ENCODE measurements at regions of chr3 and their contacts with region 1.

Region 1: GRCh38 chr3:151316267-151316991 is at the start of gene GPR87:
- DNase-seq: no peak
- H3K4me3 Mint-ChIP-seq: peak within 1 kb of the TSS; percentile 7
- H3K27ac Mint-ChIP-seq: peak within 1 kb of the TSS; percentile 61
- H3K4me1 Mint-ChIP-seq: peaks cover 24% of the 10 kb centered on the region
- H3K27me3 Mint-ChIP-seq: no peaks in the 10 kb centered on the region
- total RNA-seq, gene GPR87: 0.62 and 0.93 TPM in 2 replicates

Region 2: GRCh38 chr3:151265866-151266265 is 50.6 kb before region 1 on chr3:
- intact Hi-C with region 1: no loop called
- DNase-seq: no peak
- H3K4me3 Mint-ChIP-seq: no peak overlapping the region
- H3K27ac Mint-ChIP-seq: no peak overlapping the region
- H3K4me1 Mint-ChIP-seq: peaks cover 66% of the 10 kb centered on the region
- H3K27me3 Mint-ChIP-seq: peaks cover 5% of the 10 kb centered on the region

Region 3: DNA sequence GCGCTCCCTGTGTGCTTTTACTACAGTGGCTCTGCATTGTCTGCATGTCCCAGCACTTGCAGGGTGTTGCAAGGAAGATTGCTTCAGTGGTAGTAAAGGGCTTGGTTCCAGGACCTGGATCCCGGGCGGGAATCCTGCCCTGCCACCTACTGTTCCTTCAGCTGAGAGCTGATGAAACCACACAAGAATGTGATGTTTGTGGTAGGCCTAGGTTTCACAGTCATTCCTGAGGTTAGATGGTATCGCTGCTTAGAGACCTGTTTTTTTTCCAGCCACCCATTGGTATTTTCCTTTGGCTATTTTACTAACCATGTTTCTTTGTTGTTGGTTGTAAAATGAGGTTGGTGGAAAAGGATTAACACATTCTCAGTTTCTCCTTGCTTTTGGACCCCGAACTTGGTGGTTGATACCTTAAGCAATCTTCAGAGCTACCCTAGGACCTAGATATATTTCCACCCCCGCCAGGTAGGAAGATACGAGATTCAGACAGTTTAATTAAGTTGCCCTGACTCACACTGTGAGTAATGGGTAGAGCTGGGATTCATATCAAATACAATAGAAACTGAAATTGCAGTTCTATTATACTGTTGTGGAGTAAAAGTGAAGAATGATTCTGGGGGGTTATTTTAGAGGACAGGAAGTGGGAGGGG is 11.2 kb before region 1 on chr3:
- intact Hi-C with region 1: loop called (anchors 1 kb)
- DNase-seq: no peak
- H3K4me3 Mint-ChIP-seq: peak overlapping the region; percentile 5
- H3K27ac Mint-ChIP-seq: peak overlapping the region; percentile 70
- H3K4me1 Mint-ChIP-seq: peaks cover 63% of the 10 kb centered on the region
- H3K27me3 Mint-ChIP-seq: peaks cover 3% of the 10 kb centered on the region

Region 4: GRCh38 chr3:151327571-151328198 is 11.3 kb after region 1 on chr3:
- intact Hi-C with region 1: loop called (anchors 2 kb)
- DNase-seq: no peak
- H3K4me3 Mint-ChIP-seq: no peak overlapping the region
- H3K27ac Mint-ChIP-seq: no peak overlapping the region
- H3K4me1 Mint-ChIP-seq: peaks cover 8% of the 10 kb centered on the region
- H3K27me3 Mint-ChIP-seq: peaks cover 12% of the 10 kb centered on the region

Region 5: GRCh38 chr3:151766454-151766853 is 450.0 kb after region 1 on chr3:
- intact Hi-C with region 1: no loop called
- DNase-seq: no peak
- H3K4me3 Mint-ChIP-seq: no peak overlapping the region
- H3K27ac Mint-ChIP-seq: no peak overlapping the region
- H3K4me1 Mint-ChIP-seq: no peaks in the 10 kb centered on the region
- H3K27me3 Mint-ChIP-seq: peaks cover 7% of the 10 kb centered on the region

Region 6: DNA sequence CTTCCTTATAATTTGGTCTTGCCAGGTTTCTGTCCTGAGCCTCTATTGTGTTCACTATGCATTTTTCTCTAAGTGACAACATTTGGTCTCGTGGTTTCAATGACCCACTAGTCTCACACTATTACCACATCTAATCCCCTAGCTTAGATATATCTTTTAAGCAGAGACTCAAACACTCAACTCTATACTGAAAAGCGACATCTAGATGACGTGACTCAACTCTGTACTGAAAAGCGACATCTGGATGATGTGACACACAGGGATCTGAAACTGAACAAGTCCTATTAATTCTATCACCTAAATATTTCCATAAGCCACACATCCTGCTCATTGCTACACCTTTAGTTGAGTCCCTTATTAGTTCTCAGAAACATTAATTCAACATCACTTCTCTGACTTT is 810.6 kb after region 1 on chr3:
- intact Hi-C with region 1: loop called (anchors 1 kb)
- DNase-seq: no peak
- H3K4me3 Mint-ChIP-seq: no peak overlapping the region
- H3K27ac Mint-ChIP-seq: peak overlapping the region; percentile 49
- H3K4me1 Mint-ChIP-seq: peaks cover 28% of the 10 kb centered on the region
- H3K27me3 Mint-ChIP-seq: peaks cover 19% of the 10 kb centered on the region